ENCODE measurements at regions of chr22 and their contacts with region 1.

Region 1: DNA sequence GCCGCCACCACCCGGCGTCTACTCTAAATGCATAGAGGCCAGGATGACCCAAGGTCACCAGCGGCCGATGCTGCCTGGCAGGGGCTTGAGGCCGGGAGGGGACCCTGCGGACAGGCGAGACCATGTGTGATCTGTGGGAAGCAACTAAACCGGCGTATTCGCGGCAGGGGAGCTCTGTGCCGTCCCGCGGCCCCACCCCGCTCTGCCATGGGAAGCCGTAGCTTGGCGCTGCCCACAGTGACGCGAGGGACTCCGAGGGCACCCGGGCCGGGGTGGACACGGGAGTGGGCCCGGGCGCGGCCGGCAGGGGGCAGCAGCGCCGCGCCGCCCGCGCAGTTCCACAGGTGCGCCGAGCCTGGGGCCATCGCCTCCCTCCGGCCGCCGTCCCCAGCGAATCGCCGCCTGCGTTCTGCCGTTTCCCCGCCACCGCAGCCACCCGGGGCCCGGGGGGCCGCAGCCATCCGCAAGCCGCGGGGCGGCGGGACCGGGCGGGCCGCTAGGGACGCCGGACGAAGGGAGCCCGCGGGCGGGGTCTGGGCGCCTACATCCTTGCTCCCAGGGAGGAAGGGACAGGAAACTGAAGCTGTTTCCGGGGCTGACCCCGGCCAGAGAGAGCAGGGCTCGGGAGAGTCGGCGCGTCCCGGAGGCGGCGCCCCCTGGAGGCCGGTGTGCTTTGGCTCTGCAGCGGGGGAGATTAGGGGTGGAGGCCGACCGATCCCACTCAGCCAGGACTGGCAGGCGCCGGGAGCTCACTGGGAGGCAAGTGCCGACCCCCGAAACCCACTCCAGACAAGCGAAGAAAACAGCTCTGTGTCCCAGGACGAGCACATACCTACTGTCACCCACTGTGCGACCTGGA is 12.5 kb upstream of the HDHD5 start:
- DNase-seq: peak; percentile 79 to 87
- ATAC-seq: peak; percentile 88 to 93
- H3K4me3 ChIP-seq: peak overlapping the region; percentile 52 to 91 (median 78)
- H3K27ac ChIP-seq: peak overlapping the region; percentile 88 to 100 (median 96)
- H3K4me1 ChIP-seq: peaks cover 10 to 22% of the 10 kb centered on the region in 2 donors
- H3K27me3 ChIP-seq: no peaks in the 10 kb centered on the region
- CTCF ChIP-seq: peak; percentile 87 to 99 (median 96)
- POLR2A ChIP-seq: peak; percentile 28 to 68

Region 2: GRCh38 chr22:17077255-17077654 is 94.3 kb before region 1 on chr22:
- in situ Hi-C with region 1: loop called in 2 of 4 experiments (anchors 10 kb)
- intact Hi-C with region 1: loop called (anchors 2 kb)
- DNase-seq: no peak
- ATAC-seq: no peak
- H3K4me3 ChIP-seq: no peak overlapping the region
- H3K27ac ChIP-seq: no peak overlapping the region
- H3K4me1 ChIP-seq: peaks cover 0 to 3% of the 10 kb centered on the region in 2 donors
- H3K27me3 ChIP-seq: no peaks in the 10 kb centered on the region
- CTCF ChIP-seq: no peak
- POLR2A ChIP-seq: no peak

Region 3: DNA sequence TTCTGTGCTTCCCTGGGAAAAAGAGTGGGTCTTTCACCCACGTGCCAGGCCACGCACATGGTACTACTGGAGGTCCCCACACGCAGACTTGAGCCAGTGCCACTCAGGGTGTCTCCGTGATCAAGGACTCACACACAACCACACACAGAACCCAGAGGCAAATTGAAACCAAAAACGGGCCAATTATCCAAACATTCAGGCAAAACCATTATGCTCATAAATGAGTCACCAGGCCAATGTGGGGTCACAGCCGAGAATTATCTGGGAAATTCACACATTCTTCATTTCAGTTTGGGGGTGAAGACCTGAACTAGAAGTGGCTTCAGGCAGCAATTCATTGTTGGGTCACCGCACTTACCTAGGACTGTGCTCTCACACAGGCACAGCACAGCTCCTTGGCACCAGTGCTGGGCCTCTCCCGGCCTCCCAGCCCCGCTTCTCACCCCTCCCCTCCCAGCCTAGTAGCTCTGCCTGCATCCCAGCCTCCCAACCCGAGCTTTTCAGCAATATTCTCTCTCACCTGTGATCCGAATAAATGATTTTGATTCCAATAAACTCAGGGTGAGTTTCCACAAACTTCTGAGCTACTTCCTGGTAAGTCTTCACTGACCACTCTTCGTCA is 19.7 kb after region 1 on chr22:
- in situ Hi-C with region 1: no loop called
- intact Hi-C with region 1: no loop called
- DNase-seq: no peak
- ATAC-seq: no peak
- H3K4me3 ChIP-seq: no peak overlapping the region
- H3K27ac ChIP-seq: no peak overlapping the region
- H3K4me1 ChIP-seq: no peaks in the 10 kb centered on the region
- H3K27me3 ChIP-seq: no peaks in the 10 kb centered on the region
- CTCF ChIP-seq: no peak
- POLR2A ChIP-seq: no peak

Region 4: GRCh38 chr22:17228725-17229126 is 57.2 kb after region 1 on chr22:
- in situ Hi-C with region 1: no loop called
- intact Hi-C with region 1: no loop called
- DNase-seq: no peak
- ATAC-seq: no peak
- H3K4me3 ChIP-seq: no peak overlapping the region
- H3K27ac ChIP-seq: no peak overlapping the region
- H3K4me1 ChIP-seq: no peaks in the 10 kb centered on the region
- H3K27me3 ChIP-seq: no peaks in the 10 kb centered on the region
- CTCF ChIP-seq: no peak
- POLR2A ChIP-seq: no peak

Region 5: GRCh38 chr22:17258015-17258787 is 86.7 kb after region 1 on chr22:
- in situ Hi-C with region 1: no loop called
- intact Hi-C with region 1: loop called (anchors 5 kb)
- DNase-seq: peak; percentile 86 to 94
- ATAC-seq: peak; percentile 94 to 96
- H3K4me3 ChIP-seq: peak overlapping the region; percentile 41 to 54 (median 49)
- H3K27ac ChIP-seq: peak overlapping the region; percentile 93 to 97 (median 94)
- H3K4me1 ChIP-seq: peaks cover 27 to 33% of the 10 kb centered on the region in 2 donors
- H3K27me3 ChIP-seq: no peaks in the 10 kb centered on the region
- CTCF ChIP-seq: no peak
- POLR2A ChIP-seq: peak; percentile 34 to 66

Region 6: DNA sequence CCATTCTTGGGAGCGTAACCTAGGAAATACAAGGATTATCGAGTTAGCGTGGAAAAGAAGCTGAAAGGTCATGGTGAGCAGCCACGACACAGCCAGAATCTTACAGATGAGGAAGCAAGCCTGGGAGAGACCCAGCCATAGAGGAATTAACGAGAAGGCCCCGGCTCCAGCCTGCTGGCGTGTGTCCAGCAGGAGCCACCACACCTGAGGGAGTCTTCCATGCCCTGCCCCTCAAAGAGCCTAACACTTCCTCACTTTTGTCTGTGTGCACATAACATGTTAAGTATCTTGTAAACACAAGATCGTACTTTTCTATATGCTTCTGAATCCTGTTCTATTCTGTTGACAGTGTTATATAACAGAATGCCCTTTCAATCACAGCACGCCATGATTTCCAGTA is 215.8 kb after region 1 on chr22:
- in situ Hi-C with region 1: no loop called
- intact Hi-C with region 1: no loop called
- DNase-seq: no peak
- ATAC-seq: no peak
- H3K4me3 ChIP-seq: no peak overlapping the region
- H3K27ac ChIP-seq: peak overlapping the region in 3 of 4 donors; percentile 4 to 58 (median 54)
- H3K4me1 ChIP-seq: peaks cover 11 to 23% of the 10 kb centered on the region in 2 donors
- H3K27me3 ChIP-seq: no peaks in the 10 kb centered on the region
- CTCF ChIP-seq: no peak
- POLR2A ChIP-seq: no peak

Region 7: DNA sequence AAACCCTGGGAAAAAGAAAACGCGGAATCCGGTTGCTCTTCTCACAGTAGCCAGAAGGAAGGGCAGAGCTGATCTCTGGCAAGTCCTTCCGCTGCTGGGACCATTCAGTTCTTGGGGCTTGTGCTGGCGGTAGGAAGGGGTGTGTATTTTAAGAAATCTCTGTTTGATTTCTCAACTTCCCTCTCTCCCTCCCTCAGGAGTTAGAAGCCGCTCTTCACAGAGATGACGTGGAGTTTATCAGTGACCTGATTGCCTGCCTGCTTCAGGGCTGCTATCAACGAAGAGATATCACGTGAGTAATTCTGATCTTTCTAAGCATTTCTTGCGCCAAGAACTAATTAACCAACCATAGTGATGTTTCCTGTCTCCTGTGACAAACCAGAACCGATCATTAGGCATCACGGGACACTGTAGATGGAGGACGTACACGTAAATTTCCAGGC is 305.9 kb after region 1 on chr22:
- in situ Hi-C with region 1: loop called in 1 of 4 experiments (anchors 25 kb)
- intact Hi-C with region 1: no loop called
- DNase-seq: peak; percentile 58 to 83
- ATAC-seq: peak; percentile 83 to 87
- H3K4me3 ChIP-seq: peak overlapping the region; percentile 22 to 46 (median 42)
- H3K27ac ChIP-seq: peak overlapping the region; percentile 88 to 90 (median 89)
- H3K4me1 ChIP-seq: peaks cover 59 to 61% of the 10 kb centered on the region in 2 donors
- H3K27me3 ChIP-seq: no peaks in the 10 kb centered on the region
- CTCF ChIP-seq: no peak
- POLR2A ChIP-seq: peak; percentile 35 to 50

Region 8: DNA sequence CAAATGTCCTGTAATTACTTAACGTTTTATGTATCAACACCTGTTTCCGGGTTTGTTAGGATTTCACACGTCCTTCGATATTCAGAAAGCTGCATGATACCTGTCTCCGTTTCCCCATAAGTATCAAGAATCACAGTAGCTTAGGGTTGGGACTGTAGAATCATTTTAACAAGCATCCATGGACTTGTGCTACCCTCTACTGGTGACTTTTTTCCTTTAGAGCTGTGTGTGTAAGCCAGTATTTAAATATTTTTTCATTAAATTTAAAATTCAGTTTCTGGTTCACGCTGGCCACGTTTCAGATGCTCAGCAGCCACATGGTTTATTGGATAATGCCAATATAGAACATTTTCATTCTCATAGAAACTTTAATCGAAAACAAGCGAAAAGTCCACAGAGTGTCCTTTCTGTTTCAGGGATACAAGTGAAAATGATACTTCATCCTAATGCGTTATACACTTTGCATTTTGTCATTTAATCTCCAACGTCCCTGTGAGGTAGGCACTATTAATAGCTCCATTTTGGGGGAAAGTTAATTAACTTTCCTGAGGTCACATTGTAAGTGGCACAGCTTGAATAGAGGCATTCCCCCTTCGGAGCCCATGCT is 330.2 kb after region 1 on chr22:
- in situ Hi-C with region 1: loop called in 3 of 4 experiments (anchors 10 to 25 kb)
- intact Hi-C with region 1: loop called (anchors 2 kb)
- DNase-seq: no peak
- ATAC-seq: peak; percentile 77 to 90
- H3K4me3 ChIP-seq: no peak overlapping the region
- H3K27ac ChIP-seq: peak overlapping the region; percentile 20 to 52 (median 32)
- H3K4me1 ChIP-seq: peaks cover 4 to 10% of the 10 kb centered on the region in 2 donors
- H3K27me3 ChIP-seq: no peaks in the 10 kb centered on the region
- CTCF ChIP-seq: peak; percentile 71 to 77 (median 74)
- POLR2A ChIP-seq: no peak

Region 9: DNA sequence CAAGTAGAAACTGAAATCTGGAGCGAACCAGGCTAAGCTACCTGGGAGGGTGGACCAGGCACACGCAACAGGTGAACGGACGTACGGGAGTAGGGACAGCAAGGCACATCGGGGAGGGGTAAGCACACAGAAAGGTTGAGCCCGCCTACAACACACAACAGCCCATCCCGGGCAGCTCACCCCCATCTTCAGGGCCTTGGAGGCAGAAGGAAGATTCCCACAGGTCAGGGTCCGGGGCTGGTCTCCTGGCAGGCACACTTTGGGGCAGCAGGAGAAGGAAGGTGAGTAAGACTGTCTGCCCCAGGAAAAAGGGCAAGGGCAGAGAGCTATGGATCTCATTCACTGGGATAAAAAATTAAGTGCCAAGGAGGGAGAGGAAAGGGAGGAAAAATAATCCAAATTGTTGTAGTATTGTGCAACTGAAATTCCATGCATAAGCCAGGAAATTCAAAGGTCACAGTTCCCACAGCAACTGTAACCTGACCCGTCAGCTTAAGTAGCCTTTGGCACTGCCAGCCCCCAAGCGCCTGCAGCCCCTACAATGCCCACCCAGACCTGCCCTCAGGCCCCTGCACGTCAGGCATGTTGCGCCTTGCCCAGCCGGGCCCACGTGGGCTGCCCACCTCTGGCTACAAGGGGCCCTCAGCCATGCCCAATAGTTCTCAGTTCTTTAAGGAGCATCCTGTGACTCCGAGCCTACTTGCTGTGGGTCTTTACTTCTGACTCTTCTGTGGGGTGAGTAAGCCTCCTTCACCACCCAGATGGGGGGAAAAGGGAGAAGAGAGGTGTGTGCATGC is 801.0 kb after region 1 on chr22:
- in situ Hi-C with region 1: no loop called
- intact Hi-C with region 1: no loop called
- DNase-seq: peak in 1 of 2 donors; percentile 38
- ATAC-seq: peak; percentile 57 to 59
- H3K4me3 ChIP-seq: no peak overlapping the region
- H3K27ac ChIP-seq: peak overlapping the region; percentile 56 to 74 (median 64)
- H3K4me1 ChIP-seq: peaks cover 52 to 63% of the 10 kb centered on the region in 2 donors
- H3K27me3 ChIP-seq: no peaks in the 10 kb centered on the region
- CTCF ChIP-seq: no peak
- POLR2A ChIP-seq: no peak